HCT116 (cell line): ENCODE measurements at regions of chr16 and their contacts with region 1.

Region 1: GRCh38 chr16:16881814-16882213 is 502.9 kb downstream of the NPIPA7 start:
- DNase-seq: no peak
- ATAC-seq: no peak
- H3K4me3 ChIP-seq: no peak overlapping the region
- H3K27ac ChIP-seq: no peak overlapping the region
- H3K4me1 ChIP-seq: no peaks in the 10 kb centered on the region
- H3K27me3 ChIP-seq: peaks cover 23% of the 10 kb centered on the region
- CTCF ChIP-seq: no peak
- POLR2A ChIP-seq: no peak
- RAD21 ChIP-seq: no peak

Region 2: DNA sequence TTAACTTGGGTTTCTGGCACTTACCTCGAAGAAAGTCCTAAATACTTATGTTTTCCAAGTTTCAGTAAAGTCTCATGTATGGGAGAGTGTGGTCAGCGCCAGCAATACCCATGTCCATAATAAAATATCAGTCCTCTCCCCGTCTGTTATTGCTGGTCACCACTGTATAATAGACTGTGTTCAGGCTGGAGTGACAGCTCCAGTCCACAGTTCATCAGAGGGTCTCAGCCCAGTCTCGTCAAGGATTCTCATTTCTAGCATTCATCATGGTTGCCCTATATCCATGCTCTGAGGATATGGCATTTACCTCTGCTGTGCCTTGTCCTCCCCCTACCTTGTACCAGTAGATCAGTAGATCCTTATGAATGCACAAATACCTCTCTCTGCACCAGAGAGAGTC is 118.4 kb before region 1 on chr16:
- CTCF ChIA-PET with region 1: no interaction called
- POLR2A ChIA-PET with region 1: no interaction called
- RAD21 ChIA-PET with region 1: no interaction called
- intact Hi-C with region 1: no loop called
- DNase-seq: no peak
- ATAC-seq: no peak
- H3K4me3 ChIP-seq: no peak overlapping the region
- H3K27ac ChIP-seq: no peak overlapping the region
- H3K4me1 ChIP-seq: no peaks in the 10 kb centered on the region
- H3K27me3 ChIP-seq: no peaks in the 10 kb centered on the region
- CTCF ChIP-seq: no peak
- POLR2A ChIP-seq: no peak
- RAD21 ChIP-seq: no peak

Region 3: GRCh38 chr16:16788004-16788403 is 93.8 kb before region 1 on chr16:
- CTCF ChIA-PET with region 1: no interaction called
- POLR2A ChIA-PET with region 1: no interaction called
- RAD21 ChIA-PET with region 1: no interaction called
- intact Hi-C with region 1: no loop called
- DNase-seq: no peak
- ATAC-seq: no peak
- H3K4me3 ChIP-seq: no peak overlapping the region
- H3K27ac ChIP-seq: no peak overlapping the region
- H3K4me1 ChIP-seq: no peaks in the 10 kb centered on the region
- H3K27me3 ChIP-seq: peaks cover 11% of the 10 kb centered on the region; the same call in 1 of the 2 replicates
- CTCF ChIP-seq: no peak
- POLR2A ChIP-seq: no peak
- RAD21 ChIP-seq: no peak

Region 4: GRCh38 chr16:16871196-16871595 is 10.6 kb before region 1 on chr16:
- CTCF ChIA-PET with region 1: no interaction called
- POLR2A ChIA-PET with region 1: no interaction called
- RAD21 ChIA-PET with region 1: no interaction called
- intact Hi-C with region 1: loop called (anchors 1 kb)
- DNase-seq: no peak
- ATAC-seq: no peak
- H3K4me3 ChIP-seq: no peak overlapping the region
- H3K27ac ChIP-seq: no peak overlapping the region
- H3K4me1 ChIP-seq: no peaks in the 10 kb centered on the region
- H3K27me3 ChIP-seq: peaks cover 34% of the 10 kb centered on the region
- CTCF ChIP-seq: no peak
- POLR2A ChIP-seq: no peak
- RAD21 ChIP-seq: no peak

Region 5: GRCh38 chr16:17053536-17054160 is 171.8 kb after region 1 on chr16:
- CTCF ChIA-PET with region 1: no interaction called
- POLR2A ChIA-PET with region 1: no interaction called
- RAD21 ChIA-PET with region 1: no interaction called
- intact Hi-C with region 1: no loop called
- DNase-seq: no peak
- ATAC-seq: peak; percentile 30; the same call in 1 of the 2 replicates
- H3K4me3 ChIP-seq: no peak overlapping the region
- H3K27ac ChIP-seq: no peak overlapping the region
- H3K4me1 ChIP-seq: no peaks in the 10 kb centered on the region
- H3K27me3 ChIP-seq: peaks cover 8% of the 10 kb centered on the region
- CTCF ChIP-seq: peak in 2 of 3 experiments; percentile 6 to 10; a peak in 1 of 6 replicates
- POLR2A ChIP-seq: no peak
- RAD21 ChIP-seq: peak; percentile 17; the same call in 1 of the 2 replicates